ENCODE measurements at regions of chr1 and their contacts with region 1.

Region 1: GRCh38 chr1:156767101-156767878 is at the start of gene PRCC:
- DNase-seq: peak; percentile 89
- ATAC-seq: peak; percentile 96
- H3K4me3 Mint-ChIP-seq: no peak within 1 kb of the TSS
- H3K27ac Mint-ChIP-seq: no peak within 1 kb of the TSS
- H3K4me1 Mint-ChIP-seq: peaks cover 34% of the 10 kb centered on the region
- H3K27me3 Mint-ChIP-seq: no peaks in the 10 kb centered on the region
- total RNA-seq, gene PRCC: 65.7 to 76.0 TPM

Region 2: DNA sequence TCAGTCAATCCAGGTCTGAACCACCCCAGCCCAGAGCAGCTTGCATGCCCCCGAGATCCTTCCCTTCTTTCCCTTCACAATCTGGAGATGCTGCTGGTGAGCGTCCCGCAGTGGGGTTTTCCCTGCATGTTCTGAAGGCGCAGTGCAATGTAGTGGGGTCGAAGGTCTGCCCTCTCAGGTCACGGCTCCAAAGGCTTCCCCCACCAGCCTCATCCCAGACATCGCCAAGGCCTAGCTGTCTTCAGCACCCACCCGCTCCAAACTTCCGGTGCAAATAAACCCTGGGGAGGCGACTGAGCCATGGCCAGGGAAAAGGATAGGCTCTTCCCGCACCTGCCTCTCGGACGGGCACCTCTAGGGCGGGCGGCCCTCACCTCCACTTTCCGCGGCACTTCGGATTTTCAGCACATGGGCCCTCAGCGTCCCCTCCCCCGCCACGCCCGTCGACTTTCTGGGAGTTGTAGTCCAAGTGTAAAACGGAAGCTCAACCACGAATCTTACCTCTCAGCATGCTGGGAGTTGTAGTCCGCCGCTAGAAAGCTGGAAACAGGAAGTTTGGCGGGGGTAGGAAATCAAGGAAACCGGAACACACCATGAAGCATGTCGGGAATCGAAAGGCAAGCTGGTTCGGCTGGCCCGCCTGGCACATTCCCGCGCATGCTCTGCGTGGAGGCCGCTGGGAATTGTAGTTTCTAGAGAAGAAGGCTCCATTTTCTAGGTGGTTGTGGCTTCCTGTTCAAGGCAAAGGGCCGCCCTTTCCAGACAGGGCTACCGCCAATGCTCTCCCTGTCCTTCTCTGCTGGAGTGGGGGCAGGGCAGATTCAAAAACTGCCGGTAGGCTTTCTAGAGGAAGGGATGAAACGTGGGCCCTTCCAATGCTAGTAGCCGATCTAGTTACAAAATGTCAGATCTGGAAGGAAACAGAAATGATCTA is 26.3 kb before region 1 on chr1 and contains the start of gene MRPL24:
- POLR2A ChIA-PET with region 1: interaction called, 27 read pairs
- DNase-seq: peak; percentile 88
- ATAC-seq: peak; percentile 88
- H3K4me3 Mint-ChIP-seq: peak within 1 kb of the TSS; percentile 94
- H3K27ac Mint-ChIP-seq: peak within 1 kb of the TSS; percentile 94
- H3K4me1 Mint-ChIP-seq: peaks cover 29% of the 10 kb centered on the region
- H3K27me3 Mint-ChIP-seq: no peaks in the 10 kb centered on the region
- total RNA-seq, gene MRPL24: 45.0 to 51.1 TPM

Region 3: DNA sequence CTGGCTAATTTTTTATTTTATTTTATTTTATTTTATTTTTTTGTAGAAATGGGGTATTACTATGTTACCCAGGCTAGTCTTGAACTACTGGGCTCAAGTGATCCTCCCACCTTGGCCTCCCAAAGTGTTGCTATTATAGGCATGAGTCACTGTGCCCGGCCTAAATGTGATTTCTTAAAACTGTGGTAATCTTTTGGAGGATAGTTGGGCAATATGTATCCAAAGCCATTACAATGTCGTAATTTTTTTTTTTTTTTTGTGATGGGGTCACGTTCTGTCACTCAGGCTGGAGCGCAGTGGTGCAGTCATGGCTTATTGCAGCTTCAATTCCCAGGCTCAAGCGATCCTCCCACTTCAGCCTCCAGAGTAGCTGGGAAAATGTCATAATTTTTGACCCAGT is 318.1 kb after region 1 on chr1:
- POLR2A ChIA-PET with region 1: no interaction called
- DNase-seq: no peak
- ATAC-seq: no peak
- H3K4me3 Mint-ChIP-seq: no peak overlapping the region
- H3K27ac Mint-ChIP-seq: no peak overlapping the region
- H3K4me1 Mint-ChIP-seq: no peaks in the 10 kb centered on the region
- H3K27me3 Mint-ChIP-seq: peaks cover 6% of the 10 kb centered on the region

Measured in activated naive CD8-positive, alpha-beta T cell treated with anti-CD3 and anti-CD28 coated beads, Interleukin-2, amount 10 ng/mL, durations not matched to agents 7 days and 5 days (primary cell).